Activated naive CD4-positive, alpha-beta T cell treated with anti-CD3 and anti-CD28 coated beads for 36 hours (primary cell): ENCODE measurements at regions of chr9 and their contacts with region 1.

Region 1: DNA sequence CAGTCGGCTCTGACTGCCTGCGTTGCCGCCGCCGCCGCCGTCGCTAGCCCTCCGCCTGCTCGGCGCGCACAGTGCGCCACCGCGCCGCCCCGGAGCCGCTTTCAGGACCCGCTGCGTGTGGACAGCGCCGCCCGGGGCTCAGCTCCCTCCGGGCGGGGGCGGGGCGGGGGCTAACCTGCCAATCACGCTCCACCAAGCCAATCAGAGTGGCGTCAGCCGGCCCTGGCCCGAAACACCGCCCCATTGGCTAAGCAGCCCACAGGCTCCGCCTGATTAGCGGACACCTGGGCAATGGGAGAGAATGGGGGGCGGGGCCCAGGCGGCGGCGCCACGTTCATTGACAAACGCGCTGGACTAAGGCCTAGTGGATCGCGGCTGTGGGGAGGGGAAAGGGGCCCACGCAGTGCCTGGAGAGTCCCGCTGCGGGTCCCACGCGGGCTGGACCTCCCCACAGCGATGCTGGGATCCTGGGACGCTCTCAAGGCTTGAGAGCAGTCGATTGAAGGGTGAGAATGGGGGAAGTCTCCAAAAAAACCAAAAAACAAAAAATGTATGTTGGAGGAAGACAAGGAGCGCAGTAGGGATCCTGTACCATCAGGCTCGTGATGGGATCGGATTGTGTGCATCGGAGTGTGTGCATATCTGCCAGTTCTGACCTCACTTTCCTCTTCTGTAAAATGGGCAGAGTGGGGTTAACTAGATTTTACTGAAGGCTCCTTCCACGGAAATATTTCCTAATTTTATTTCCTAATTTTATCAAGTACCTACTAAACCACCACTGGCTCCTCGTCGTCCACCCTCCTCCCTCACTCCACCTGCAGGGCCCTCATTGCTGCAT is 6.3 kb downstream of the PAX5 start:
- DNase-seq: peak; percentile 95
- H3K4me3 Mint-ChIP-seq: peak overlapping the region; percentile 66
- H3K27ac Mint-ChIP-seq: no peak overlapping the region
- H3K4me1 Mint-ChIP-seq: peaks cover 48% of the 10 kb centered on the region
- H3K27me3 Mint-ChIP-seq: peaks cover 85% of the 10 kb centered on the region

Region 2: DNA sequence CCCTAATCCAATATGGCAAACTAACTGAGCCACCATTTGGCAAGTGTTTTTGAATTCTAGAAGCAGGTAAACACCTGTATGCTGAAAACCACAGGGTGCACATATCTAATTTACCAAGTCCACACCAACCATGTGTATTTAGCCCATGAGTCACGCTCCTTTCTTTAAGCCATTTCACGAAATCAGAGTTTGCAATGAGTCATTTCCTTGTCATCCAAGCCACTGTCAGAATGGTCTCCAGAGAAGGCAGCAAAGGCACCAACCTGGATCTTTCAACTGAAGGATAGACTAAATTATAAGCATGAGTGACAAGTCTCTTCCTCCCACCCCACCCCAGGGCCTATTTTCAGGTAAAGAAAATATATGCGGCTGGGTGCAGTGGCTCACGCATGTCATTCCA is 103.7 kb before region 1 on chr9:
- CTCF ChIA-PET with region 1: no interaction called
- intact Hi-C with region 1: loop called (anchors 2 kb)
- DNase-seq: peak; percentile 58
- H3K4me3 Mint-ChIP-seq: no peak overlapping the region
- H3K27ac Mint-ChIP-seq: peak overlapping the region; percentile 31
- H3K4me1 Mint-ChIP-seq: peaks cover 27% of the 10 kb centered on the region
- H3K27me3 Mint-ChIP-seq: peaks cover 16% of the 10 kb centered on the region

Region 3: DNA sequence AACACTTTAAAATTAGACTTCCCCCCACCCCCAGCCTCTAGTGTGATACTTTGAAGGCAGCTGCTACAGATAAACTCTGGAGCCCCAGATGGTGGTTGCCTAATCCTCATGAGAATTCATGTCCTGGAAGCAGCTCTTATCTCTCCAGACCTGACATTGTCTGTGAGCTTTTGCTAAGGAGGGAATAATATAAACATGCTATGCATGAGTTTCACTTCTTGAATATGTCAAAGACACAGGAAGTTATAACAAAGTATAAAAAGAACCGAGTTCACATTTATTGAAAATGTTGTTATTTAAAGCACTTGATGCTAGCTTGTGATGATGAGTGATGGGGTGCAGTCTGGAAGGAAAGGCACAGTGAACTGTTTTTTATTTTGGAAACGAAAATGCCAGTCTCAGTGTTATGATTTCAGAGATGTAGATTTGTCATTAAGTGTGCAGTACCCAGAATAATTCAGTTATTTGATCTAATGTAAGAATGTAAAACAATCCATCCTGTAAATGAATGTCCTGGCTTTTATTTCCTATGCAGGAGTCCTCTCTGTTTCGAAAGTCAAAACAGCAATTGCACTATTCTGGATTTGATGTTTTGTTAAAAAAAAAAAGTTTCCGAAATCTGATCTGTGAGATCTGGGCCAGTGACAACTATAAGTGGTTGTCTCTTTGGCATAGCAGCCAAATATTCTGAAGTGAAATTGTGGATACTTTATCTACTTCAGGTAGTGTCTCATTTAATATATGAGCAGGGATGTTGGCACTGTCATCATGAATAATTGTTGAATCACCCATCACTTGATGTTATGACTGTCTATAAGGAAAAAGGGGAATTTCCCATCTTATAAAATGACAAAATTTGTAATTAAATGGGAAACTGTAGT is 169.6 kb after region 1 on chr9:
- CTCF ChIA-PET with region 1: no interaction called
- intact Hi-C with region 1: loop called (anchors 5 kb)
- DNase-seq: peak; percentile 27
- H3K4me3 Mint-ChIP-seq: peak overlapping the region; percentile 19
- H3K27ac Mint-ChIP-seq: peak overlapping the region; percentile 82
- H3K4me1 Mint-ChIP-seq: peaks cover 70% of the 10 kb centered on the region
- H3K27me3 Mint-ChIP-seq: no peaks in the 10 kb centered on the region

Region 4: DNA sequence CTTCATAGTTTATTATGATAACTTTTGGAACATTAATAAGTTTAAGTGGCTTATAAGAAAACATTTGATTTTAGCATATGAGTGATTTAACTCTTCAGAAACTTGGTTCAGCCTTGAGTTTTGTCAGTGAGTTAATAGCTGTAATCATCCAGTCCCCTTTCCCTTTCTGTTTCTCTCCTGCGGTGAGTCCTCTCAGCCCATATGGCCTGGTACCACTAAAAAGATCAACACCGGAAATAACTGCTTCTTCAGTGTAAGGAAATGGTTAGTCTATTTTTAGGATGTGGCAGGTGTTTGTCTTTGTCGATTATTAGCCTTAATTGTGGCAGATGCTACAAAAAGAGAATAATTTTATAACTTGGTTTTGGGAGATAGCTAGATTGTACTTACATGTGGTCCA is 274.5 kb after region 1 on chr9:
- CTCF ChIA-PET with region 1: no interaction called
- intact Hi-C with region 1: loop called (anchors 5 kb)
- DNase-seq: peak; percentile 70
- H3K4me3 Mint-ChIP-seq: peak overlapping the region; percentile 25
- H3K27ac Mint-ChIP-seq: peak overlapping the region; percentile 92
- H3K4me1 Mint-ChIP-seq: peaks cover 59% of the 10 kb centered on the region
- H3K27me3 Mint-ChIP-seq: no peaks in the 10 kb centered on the region

Region 5: DNA sequence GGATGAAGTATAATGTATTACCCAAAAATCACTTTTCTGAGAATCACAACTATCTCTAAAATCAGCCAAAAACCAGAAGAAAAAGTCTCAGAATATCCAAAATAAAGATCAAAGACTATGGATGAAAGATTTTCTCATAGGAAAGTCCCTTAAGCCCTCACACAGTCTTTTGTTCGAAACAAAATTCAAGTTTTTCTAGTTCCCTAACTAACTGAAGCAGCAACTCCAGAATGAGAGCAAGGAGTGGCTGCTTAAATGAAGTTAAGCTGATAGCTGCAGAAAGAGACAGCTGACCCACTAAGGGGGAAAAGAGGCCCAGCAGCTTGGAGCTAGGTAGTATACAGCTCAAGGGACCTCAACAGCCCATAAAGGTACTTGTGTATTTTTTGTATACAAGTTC is 429.0 kb after region 1 on chr9:
- CTCF ChIA-PET with region 1: no interaction called
- intact Hi-C with region 1: no loop called
- DNase-seq: no peak
- H3K4me3 Mint-ChIP-seq: no peak overlapping the region
- H3K27ac Mint-ChIP-seq: no peak overlapping the region
- H3K4me1 Mint-ChIP-seq: peaks cover 47% of the 10 kb centered on the region
- H3K27me3 Mint-ChIP-seq: no peaks in the 10 kb centered on the region

Region 6: DNA sequence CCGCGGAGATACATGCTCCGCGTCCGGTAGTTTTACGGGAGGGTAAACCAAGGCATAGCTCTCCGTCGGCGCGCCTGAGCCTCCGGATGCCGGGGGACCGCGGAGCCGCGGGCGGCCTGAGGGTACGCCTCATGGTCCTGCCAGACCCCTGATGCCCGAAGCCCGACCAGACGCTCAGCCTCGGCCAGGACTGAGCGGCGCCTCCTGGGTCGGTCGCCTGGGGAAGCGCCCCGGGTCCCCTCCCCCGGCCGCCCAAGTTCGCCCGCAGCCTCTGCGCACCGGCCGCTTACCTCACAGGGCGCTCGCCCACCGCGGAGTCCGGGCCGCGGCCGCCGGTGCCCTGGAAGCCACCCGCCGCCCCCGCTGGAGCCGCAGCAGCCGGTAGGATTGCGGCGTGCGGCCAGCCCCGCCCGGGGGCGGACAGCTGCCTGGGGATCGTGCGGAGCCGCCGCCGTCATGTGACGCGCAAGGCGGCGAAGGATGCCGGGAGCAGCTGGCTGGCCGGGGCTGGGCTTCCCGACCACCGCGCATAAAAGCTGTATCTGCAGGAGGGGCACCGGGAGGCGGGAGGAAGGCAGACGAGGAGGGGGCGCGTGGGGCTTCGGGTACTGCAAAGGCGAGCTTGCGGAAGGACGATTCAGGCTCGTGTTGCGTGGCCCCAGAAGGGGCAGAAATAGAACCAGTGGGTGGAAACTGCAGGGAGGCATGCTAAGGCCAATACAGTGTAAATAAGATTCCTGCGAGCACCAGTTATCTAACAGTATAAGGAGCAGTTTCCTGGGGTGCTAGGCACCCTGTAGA is 548.3 kb after region 1 on chr9 and contains the start of gene FBXO10:
- CTCF ChIA-PET with region 1: no interaction called
- intact Hi-C with region 1: loop called (anchors 5 kb)
- DNase-seq: peak; percentile 47
- H3K4me3 Mint-ChIP-seq: peak within 1 kb of the TSS; percentile 77
- H3K27ac Mint-ChIP-seq: no peak within 1 kb of the TSS
- H3K4me1 Mint-ChIP-seq: peaks cover 21% of the 10 kb centered on the region
- H3K27me3 Mint-ChIP-seq: no peaks in the 10 kb centered on the region
- total RNA-seq, gene FBXO10: 1.0 to 1.1 TPM